Right ventricle myocardium inferior (tissue), 1 donor: ENCODE measurements at regions of chr16 and their contacts with region 1.

Region 1: DNA sequence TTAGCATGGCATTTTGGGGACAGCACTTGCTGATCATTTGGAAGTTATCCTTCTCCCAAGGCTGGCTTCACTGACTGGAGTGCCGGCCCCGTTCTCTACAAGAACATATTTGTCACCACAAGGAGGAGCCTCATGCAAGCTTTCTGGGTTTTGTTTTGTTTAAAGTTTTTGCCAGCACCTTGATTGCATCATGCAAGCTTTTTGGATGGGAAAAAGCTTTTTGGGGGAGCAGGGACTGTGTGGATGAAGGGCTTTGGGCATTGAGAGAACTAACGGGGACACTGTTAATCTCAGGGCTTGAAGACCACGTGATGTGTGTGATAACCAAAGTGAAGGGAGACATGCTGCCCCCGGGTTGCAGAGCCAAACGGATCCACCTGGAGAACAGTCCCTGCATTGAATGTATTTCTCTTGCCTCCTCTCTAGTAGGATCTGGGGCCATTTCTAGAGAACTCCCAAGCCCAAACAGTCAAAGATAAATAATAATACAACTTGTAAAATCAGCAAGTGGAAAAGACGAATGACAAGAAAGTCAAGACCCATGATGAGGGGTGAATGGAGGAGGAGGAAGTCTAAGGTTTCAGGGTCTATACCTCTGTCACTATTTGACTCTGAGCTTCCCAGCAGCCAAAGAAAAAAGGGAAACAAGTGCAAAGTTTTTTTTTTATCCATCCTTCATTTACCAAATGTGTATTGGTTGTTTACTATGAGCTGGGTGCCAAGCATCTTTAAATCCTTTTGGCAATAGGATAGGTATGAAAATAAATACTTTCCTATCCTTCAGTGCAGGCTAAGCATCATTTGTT is 17.2 kb downstream of the TMEM114 start:
- DNase-seq: no peak
- ATAC-seq: no peak

Region 2: GRCh38 chr16:8621572-8622314 is 48.6 kb after region 1 on chr16 and contains the start of gene METTL22:
- intact Hi-C with region 1: loop called (anchors 10 kb)
- DNase-seq: peak; percentile 97
- ATAC-seq: peak; percentile 99
- total RNA-seq, gene METTL22: 29.3 TPM